ENCODE measurements at regions of chr15 and their contacts with region 1.

Region 1: GRCh38 chr15:63504247-63504978 is at the start of gene USP3:
- DNase-seq: peak; percentile 95 to 97 (median 97)
- ATAC-seq: peak; percentile 91 to 93 (median 92)
- H3K4me3 ChIP-seq: peak within 1 kb of the TSS; percentile 53 to 95 (median 80)
- H3K27ac ChIP-seq: peak within 1 kb of the TSS; percentile 94 to 99 (median 98)
- H3K4me1 ChIP-seq: peaks cover 3 to 82% (median 63%) of the 10 kb centered on the region in 12 donors
- H3K27me3 ChIP-seq: no peaks in the 10 kb centered on the region
- CTCF ChIP-seq: peak; percentile 21 to 68 (median 38)
- POLR2A ChIP-seq: peak; percentile 62 to 85
- total RNA-seq, gene USP3: 14.3 to 30.8 (median 18.4) TPM

Region 2: DNA sequence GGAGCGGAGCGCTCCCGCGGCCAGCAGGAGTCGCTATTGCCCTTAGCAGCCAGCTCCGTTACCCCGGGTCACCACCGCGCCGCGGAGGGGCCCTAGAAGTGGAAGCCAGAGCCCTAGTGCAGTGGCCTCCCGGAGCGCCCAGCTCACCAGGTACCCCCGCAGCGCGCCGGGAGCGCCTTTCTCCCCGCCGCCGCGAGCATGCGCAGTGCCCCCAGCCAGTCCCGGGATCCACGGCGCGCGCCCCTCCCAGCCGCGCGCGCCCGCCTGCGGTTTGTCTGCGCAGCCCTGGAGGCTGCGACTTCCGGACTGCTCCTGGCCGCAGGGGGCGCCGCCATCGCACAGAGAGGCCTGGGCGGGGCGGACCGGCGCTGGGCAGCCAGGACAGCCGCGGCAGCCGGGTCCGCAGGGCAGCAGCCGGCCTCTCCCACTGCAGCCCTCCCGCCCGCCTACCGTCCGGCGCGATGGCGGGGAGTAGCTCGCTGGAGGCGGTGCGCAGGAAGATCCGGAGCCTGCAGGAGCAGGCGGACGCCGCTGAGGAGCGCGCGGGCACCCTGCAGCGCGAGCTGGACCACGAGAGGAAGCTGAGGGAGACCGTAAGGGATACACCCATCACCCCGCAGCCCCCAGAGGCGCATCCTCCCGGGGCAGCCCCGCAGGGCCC is 456.2 kb before region 1 on chr15:
- intact Hi-C with region 1: no loop called
- DNase-seq: peak; percentile 90 to 95 (median 91)
- ATAC-seq: peak; percentile 28 to 83 (median 62)
- H3K4me3 ChIP-seq: peak overlapping the region; percentile 62 to 95 (median 84)
- H3K27ac ChIP-seq: peak overlapping the region; percentile 91 to 99 (median 96)
- H3K4me1 ChIP-seq: peaks cover 0 to 85% (median 49%) of the 10 kb centered on the region in 12 donors
- H3K27me3 ChIP-seq: peaks cover 0 to 40% (median 0%) of the 10 kb centered on the region in 9 donors
- CTCF ChIP-seq: peak; percentile 79 to 98 (median 91)
- POLR2A ChIP-seq: peak; percentile 24 to 96

Region 3: DNA sequence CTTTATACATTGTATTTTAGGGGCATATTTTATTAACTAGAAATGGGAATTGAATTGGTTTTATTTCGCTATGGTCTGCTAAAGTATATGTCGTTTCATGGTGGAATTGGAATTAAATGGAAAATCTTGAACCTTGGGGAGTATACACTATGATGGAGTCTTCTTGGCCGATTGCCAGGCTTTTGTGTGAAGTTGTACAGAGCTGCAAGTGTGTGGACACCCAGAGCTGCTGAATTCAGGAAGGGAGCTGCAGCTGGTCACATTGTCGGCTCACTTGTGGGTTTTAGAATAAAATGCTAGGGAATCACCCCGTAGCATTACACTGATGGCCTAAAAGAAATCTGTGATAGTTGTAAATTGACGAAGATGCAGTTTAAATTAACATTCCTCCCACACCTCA is 35.1 kb after region 1 on chr15:
- intact Hi-C with region 1: loop called in 1 of 10 experiments (anchors 2 kb)
- DNase-seq: peak in 4 of 5 donors; percentile 37 to 49 (median 42)
- ATAC-seq: peak in 1 of 4 donors; percentile 55
- H3K4me3 ChIP-seq: no peak overlapping the region
- H3K27ac ChIP-seq: no peak overlapping the region
- H3K4me1 ChIP-seq: peaks cover 0 to 45% (median 0%) of the 10 kb centered on the region in 12 donors
- H3K27me3 ChIP-seq: no peaks in the 10 kb centered on the region
- CTCF ChIP-seq: no peak
- POLR2A ChIP-seq: no peak

Region 4: DNA sequence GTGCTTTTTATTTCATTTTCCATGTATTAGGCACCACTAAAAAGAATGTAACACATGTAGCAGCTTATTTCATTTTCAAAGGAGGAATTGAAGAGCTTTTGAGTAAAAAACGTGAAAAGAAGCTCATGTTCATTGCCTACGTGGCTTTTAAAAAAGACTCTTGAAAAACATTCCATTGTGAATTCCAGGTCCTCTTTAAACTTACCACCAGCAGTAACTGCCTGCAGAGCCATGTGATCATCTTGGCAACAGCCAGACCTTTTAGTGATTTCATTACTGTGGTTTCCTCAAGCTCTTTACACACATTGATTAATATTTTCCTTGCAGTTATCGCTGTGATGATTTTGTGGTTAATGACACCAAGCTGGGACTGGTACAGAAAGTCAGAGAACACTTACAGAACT is 49.0 kb after region 1 on chr15:
- intact Hi-C with region 1: loop called in 5 of 10 experiments (anchors 2 to 10 kb)
- DNase-seq: peak in 3 of 5 donors; percentile 29 to 36 (median 31)
- ATAC-seq: peak; percentile 69 to 92 (median 86)
- H3K4me3 ChIP-seq: peak overlapping the region in 5 of 12 donors; percentile 1 to 14 (median 6)
- H3K27ac ChIP-seq: peak overlapping the region in 8 of 12 donors; percentile 12 to 68 (median 42)
- H3K4me1 ChIP-seq: peaks cover 0 to 41% (median 15%) of the 10 kb centered on the region in 12 donors
- H3K27me3 ChIP-seq: no peaks in the 10 kb centered on the region
- CTCF ChIP-seq: no peak
- POLR2A ChIP-seq: no peak

Region 5: DNA sequence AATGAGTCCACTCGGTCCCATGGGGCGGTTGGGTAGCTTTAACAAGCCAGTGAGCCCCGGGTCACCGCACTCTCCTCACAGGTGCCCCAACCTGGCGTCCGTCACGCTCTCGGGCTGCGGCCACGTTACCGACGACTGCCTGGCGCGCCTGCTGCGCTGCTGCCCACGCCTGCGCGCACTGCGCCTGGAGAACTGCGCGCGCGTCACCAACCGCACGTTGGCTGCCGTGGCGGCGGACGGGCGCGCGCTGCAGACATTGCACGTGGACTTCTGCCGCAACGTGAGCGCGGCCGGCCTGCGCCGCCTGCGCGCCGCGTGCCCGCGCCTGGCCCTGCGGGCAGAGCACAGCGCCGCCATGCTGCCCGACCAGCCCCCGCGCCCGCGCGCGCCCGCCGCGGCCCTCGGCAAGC is 96.2 kb after region 1 on chr15:
- intact Hi-C with region 1: loop called in 9 of 10 experiments (anchors 5 kb)
- DNase-seq: peak; percentile 86 to 95 (median 91)
- ATAC-seq: peak; percentile 18 to 83 (median 64)
- H3K4me3 ChIP-seq: peak overlapping the region; percentile 30 to 83 (median 65)
- H3K27ac ChIP-seq: peak overlapping the region; percentile 14 to 95 (median 88)
- H3K4me1 ChIP-seq: peaks cover 0 to 75% (median 46%) of the 10 kb centered on the region in 12 donors
- H3K27me3 ChIP-seq: no peaks in the 10 kb centered on the region
- CTCF ChIP-seq: peak in 4 of 12 donors; percentile 20 to 41 (median 34)
- POLR2A ChIP-seq: peak in 1 of 2 donors; percentile 76

Region 6: GRCh38 chr15:64460206-64460734 is 955.9 kb after region 1 on chr15 and contains the start of gene ZNF609:
- intact Hi-C with region 1: loop called in 1 of 10 experiments (anchors 5 kb)
- DNase-seq: peak; percentile 93 to 96 (median 94)
- ATAC-seq: peak; percentile 75 to 92 (median 84)
- H3K4me3 ChIP-seq: peak within 1 kb of the TSS; percentile 56 to 89 (median 73)
- H3K27ac ChIP-seq: peak within 1 kb of the TSS; percentile 67 to 94 (median 84)
- H3K4me1 ChIP-seq: peaks cover 9 to 69% (median 37%) of the 10 kb centered on the region in 12 donors
- H3K27me3 ChIP-seq: no peaks in the 10 kb centered on the region
- CTCF ChIP-seq: no peak
- POLR2A ChIP-seq: peak in 1 of 2 donors; percentile 57
- total RNA-seq, gene ZNF609: 12.2 to 24.5 (median 17.2) TPM

Measured in heart left ventricle (tissue), 16 donors.